Heart left ventricle (tissue), 16 donors: ENCODE measurements at regions of chr7 and their contacts with region 1.

Region 1: DNA sequence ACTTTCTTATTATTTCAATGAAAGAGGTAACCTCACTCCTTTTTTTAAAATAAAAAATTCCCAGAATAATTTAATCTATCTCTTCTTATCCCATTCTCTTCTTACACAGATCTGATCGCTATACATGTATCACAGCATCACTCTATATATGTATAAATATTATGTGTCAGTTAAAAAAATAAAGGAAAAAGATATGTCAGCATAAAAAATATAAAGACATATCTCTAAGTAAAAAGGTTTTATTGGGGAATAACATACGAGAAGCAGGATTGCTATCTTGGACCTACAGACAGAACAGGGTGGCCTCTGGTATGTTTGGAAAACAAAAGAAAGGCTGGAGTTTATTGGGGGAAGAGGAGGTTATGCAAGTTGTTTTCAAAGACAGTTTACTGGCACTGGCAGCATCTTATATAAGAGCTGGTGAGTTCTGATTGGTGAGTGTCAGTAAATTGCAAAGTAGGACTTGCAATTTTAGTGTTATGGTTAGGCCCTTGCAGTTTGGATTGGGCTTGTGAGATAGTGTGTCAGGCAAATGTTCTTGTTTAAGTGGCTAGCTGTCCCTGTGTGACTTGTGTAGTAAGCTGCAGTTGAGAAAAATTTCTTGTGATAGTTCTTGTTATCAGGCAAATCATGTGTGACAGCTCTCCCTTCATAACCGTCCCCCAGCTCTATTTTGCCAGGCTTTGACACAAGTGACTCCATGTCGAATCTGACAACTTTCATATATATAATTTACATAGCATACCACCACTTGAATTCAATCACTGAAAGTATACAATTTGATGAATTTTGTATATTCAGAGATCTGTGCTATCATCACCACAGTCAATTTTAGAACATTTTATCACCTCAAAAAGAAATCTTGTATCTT is 118.2 kb downstream of the HBP1 start:
- DNase-seq: peak in 1 of 5 donors; percentile 23
- ATAC-seq: peak; percentile 50 to 79 (median 58)
- H3K4me3 ChIP-seq: no peak overlapping the region
- H3K27ac ChIP-seq: peak overlapping the region; percentile 29 to 87 (median 75)
- H3K4me1 ChIP-seq: peaks cover 0 to 23% (median 7%) of the 10 kb centered on the region in 12 donors
- H3K27me3 ChIP-seq: no peaks in the 10 kb centered on the region
- CTCF ChIP-seq: no peak
- POLR2A ChIP-seq: no peak

Region 2: GRCh38 chr7:107213193-107213788 is 73.7 kb before region 1 on chr7:
- intact Hi-C with region 1: loop called in 1 of 10 experiments (anchors 5 kb)
- DNase-seq: peak; percentile 22 to 73 (median 58)
- ATAC-seq: peak; percentile 35 to 81 (median 73)
- H3K4me3 ChIP-seq: no peak overlapping the region
- H3K27ac ChIP-seq: peak overlapping the region in 6 of 12 donors; percentile 5 to 49 (median 32)
- H3K4me1 ChIP-seq: peaks cover 0 to 22% (median 8%) of the 10 kb centered on the region in 12 donors
- H3K27me3 ChIP-seq: no peaks in the 10 kb centered on the region
- CTCF ChIP-seq: peak in 1 of 12 donors; percentile 4
- POLR2A ChIP-seq: no peak

Region 3: GRCh38 chr7:107224374-107225223 is 62.4 kb before region 1 on chr7:
- intact Hi-C with region 1: loop called in 4 of 10 experiments (anchors 5 to 10 kb)
- DNase-seq: no peak
- ATAC-seq: peak in 2 of 4 donors; percentile 25 to 29
- H3K4me3 ChIP-seq: no peak overlapping the region
- H3K27ac ChIP-seq: peak overlapping the region in 9 of 12 donors; percentile 7 to 93 (median 43)
- H3K4me1 ChIP-seq: peaks cover 0 to 31% (median 2%) of the 10 kb centered on the region in 12 donors
- H3K27me3 ChIP-seq: no peaks in the 10 kb centered on the region
- CTCF ChIP-seq: no peak
- POLR2A ChIP-seq: no peak

Region 4: DNA sequence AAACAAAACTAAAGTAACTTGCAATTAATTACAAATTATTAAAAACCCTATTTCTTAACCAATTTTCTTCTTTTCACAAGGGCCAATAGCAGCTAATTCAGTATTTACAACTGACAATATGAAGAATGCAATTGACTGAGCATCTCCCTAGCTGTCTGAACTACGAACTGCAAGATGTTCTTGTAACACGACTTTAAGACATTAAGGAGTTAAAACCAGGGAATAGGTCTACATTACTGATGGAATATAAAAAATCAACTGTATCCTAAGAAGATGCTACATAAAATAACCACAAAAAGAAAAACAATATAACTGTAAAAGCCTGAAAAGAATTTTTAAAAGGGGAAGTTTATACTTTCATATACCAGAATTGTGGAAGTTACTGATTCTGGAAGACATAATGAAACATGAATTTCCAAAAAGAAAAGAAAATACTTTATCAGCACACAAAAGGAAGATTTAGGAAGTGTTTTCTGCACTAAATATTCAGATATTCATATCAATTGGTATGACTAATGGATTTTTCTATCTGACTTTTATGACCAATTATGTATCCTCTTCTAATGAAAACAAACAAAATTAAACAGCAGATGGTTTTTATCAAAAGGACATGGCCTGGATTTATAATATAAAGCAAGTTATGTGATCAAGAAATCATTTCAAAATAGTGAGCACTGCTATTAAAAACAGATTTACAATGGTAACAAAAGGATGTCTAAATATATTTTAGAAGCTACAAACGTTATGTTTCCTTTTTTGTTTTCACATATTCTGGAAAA is 184.5 kb after region 1 on chr7:
- intact Hi-C with region 1: loop called in 2 of 10 experiments (anchors 10 kb)
- DNase-seq: no peak
- ATAC-seq: peak; percentile 35 to 62 (median 48)
- H3K4me3 ChIP-seq: peak overlapping the region in 11 of 12 donors; percentile 6 to 56 (median 42)
- H3K27ac ChIP-seq: peak overlapping the region; percentile 12 to 84 (median 74)
- H3K4me1 ChIP-seq: peaks cover 0 to 18% (median 0%) of the 10 kb centered on the region in 12 donors
- H3K27me3 ChIP-seq: no peaks in the 10 kb centered on the region
- CTCF ChIP-seq: peak in 7 of 12 donors; percentile 9 to 44 (median 34)
- POLR2A ChIP-seq: no peak

Region 5: GRCh38 chr7:107711301-107711700 is 424.3 kb after region 1 on chr7:
- intact Hi-C with region 1: no loop called
- DNase-seq: no peak
- ATAC-seq: no peak
- H3K4me3 ChIP-seq: no peak overlapping the region
- H3K27ac ChIP-seq: no peak overlapping the region
- H3K4me1 ChIP-seq: no peaks in the 10 kb centered on the region
- H3K27me3 ChIP-seq: no peaks in the 10 kb centered on the region
- CTCF ChIP-seq: no peak
- POLR2A ChIP-seq: no peak

Region 6: DNA sequence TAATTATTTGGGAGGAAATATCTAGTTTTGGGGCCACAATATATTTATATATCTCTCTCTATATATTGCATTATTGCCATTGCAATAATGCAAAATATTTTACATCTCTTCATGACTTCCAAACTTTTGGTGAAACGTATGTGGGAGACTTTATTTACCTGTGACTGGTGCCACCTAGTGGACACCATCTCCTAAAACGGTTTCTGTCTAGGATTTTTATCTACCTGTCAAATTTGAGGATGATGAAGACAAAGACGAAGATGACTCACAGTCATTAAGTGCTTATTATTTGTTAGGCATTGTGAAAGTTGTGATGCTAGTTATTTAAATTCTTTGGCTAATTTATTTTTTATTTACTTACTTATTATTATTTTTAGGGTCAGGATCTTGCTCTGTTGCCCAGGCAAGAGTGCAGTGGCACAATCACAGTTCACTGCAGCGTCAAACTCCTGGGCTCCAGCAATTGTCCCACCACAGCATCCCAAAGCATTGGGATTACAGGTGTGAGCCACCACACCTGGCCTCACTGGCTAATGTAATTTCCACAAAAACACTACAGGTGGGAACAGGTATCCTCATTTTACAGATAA is 438.3 kb after region 1 on chr7:
- intact Hi-C with region 1: loop called in 1 of 10 experiments (anchors 5 kb)
- DNase-seq: peak in 3 of 5 donors; percentile 31 to 45 (median 36)
- ATAC-seq: no peak
- H3K4me3 ChIP-seq: no peak overlapping the region
- H3K27ac ChIP-seq: no peak overlapping the region
- H3K4me1 ChIP-seq: no peaks in the 10 kb centered on the region
- H3K27me3 ChIP-seq: peaks cover 0 to 14% (median 0%) of the 10 kb centered on the region in 9 donors
- CTCF ChIP-seq: peak; percentile 61 to 83 (median 77)
- POLR2A ChIP-seq: no peak